H1 (cell line): ENCODE measurements at regions of chr9 and their contacts with region 1.

Region 1: DNA sequence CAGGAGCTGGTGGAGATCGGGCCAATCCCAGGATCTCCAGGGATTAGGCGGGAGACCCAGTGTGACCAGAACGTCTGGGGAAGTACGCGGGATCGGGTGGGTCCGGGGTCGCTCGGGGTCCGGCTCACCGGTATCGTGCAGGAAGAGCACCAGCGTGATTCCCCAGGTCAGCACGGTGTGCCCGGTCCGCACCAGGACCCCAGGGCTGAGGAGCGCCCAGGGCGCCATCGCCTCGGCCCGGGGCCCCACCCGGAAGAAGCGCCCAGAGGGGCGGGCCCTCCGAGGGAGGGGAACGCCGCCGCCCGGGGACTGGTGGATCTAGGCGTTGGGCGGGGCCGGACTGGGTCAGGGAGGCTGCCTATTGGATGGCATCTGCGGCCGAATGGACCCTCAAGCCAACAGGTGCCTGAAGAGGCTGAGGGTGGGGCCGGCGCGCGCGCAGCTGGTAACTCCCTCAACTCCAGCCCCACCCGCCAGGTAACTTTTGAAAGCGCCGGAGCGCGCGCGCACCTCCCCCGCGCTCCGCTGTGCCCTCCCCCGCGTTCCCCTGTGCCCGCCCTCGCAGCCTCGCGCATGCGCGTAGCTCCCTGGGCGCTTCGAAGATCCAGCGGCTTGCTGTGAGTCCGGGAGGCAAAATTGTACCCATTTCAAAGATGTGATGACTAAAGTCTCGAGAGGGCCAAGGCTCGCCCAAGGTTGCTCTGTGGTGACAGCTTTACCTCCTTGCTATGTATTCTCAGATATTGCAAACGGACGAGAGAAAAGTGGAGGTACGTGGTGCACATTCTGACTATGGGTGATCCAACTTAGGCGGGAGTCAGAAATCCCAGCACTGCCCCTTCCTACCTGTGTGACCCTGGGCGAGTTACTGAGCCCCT is at the start of gene ZDHHC12:
- DNase-seq: peak; percentile 98
- H3K4me3 ChIP-seq: peak within 1 kb of the TSS; percentile 73 to 92 (median 90)
- H3K27ac ChIP-seq: peak within 1 kb of the TSS; percentile 46
- H3K4me1 ChIP-seq: peaks cover 0 to 3% (median 0%) of the 10 kb centered on the region in 4 experiments; a peak in 3 of 7 replicates
- H3K27me3 ChIP-seq: no peaks in the 10 kb centered on the region
- CTCF ChIP-seq: no peak
- EP300 ChIP-seq: no peak
- POLR2A ChIP-seq: peak; percentile 62 to 94
- RAD21 ChIP-seq: no peak
- total RNA-seq, gene ZDHHC12: 32.8 and 35.0 TPM in 2 replicates

Region 2: GRCh38 chr9:128635283-128636023 is 88.7 kb before region 1 on chr9:
- CTCF ChIA-PET with region 1: interaction called, 9 read pairs
- POLR2A ChIA-PET with region 1: interaction called, 10 read pairs
- DNase-seq: peak; percentile 81 to 90
- H3K4me3 ChIP-seq: no peak overlapping the region
- H3K27ac ChIP-seq: peak overlapping the region; percentile 34; the same call in 1 of the 2 replicates
- H3K4me1 ChIP-seq: peaks cover 0 to 14% (median 11%) of the 10 kb centered on the region in 4 experiments; a peak in 5 of 7 replicates
- H3K27me3 ChIP-seq: no peaks in the 10 kb centered on the region
- CTCF ChIP-seq: peak in 2 of 3 experiments; percentile 59 to 68; a peak in 3 of 4 replicates
- EP300 ChIP-seq: no peak
- POLR2A ChIP-seq: no peak
- RAD21 ChIP-seq: peak; percentile 60 to 71

Region 3: DNA sequence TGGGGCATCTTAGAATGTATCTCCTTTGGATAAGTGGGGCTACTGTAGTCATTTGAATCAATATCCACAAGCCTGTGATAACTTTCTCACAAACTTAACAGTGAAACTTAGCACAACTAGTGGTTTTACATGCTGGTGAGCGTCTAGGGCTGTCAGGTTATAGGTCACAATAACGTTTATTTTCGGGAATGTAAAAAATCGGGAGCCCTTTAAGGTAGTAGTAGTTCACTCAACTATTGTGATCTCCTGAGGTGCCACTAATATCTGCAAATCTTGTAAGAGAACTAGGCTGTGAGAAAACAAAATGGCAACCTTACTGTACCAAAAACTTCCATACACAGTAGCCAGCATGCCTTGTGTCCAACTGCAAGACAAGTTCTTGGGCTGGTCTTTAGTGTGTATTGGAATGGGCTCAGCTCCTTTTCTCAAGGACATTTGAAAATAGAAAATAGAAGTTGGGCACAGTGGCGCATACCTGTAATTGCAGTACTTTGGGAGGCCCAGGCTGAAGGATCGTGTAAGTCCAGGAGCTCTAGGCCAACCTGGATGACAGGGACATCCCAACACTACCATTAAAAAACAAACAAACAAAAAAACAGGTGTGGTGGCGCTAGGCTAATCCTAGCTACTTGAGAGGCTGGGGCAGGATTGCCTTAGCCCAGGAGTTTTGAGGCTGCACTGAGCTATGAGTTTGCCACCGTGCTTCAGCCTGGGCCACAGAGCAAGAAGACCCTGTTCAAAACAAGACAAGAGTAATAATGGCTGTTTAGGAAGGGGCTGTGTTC is 27.0 kb before region 1 on chr9:
- CTCF ChIA-PET with region 1: interaction called, 3 read pairs
- POLR2A ChIA-PET with region 1: interaction called, 49 read pairs
- DNase-seq: no peak
- H3K4me3 ChIP-seq: no peak overlapping the region
- H3K27ac ChIP-seq: no peak overlapping the region
- H3K4me1 ChIP-seq: no peaks in the 10 kb centered on the region
- H3K27me3 ChIP-seq: peaks cover 0 to 1% (median 0%) of the 10 kb centered on the region in 4 experiments; a peak in 1 of 7 replicates
- CTCF ChIP-seq: no peak
- EP300 ChIP-seq: no peak
- POLR2A ChIP-seq: peak; percentile 54 to 68
- RAD21 ChIP-seq: no peak

Region 4: GRCh38 chr9:128702445-128702948 is 21.6 kb before region 1 on chr9 and contains the start of gene PKN3:
- CTCF ChIA-PET with region 1: interaction called, 3 read pairs
- POLR2A ChIA-PET with region 1: interaction called, 133 read pairs
- DNase-seq: peak; percentile 61 to 99
- H3K4me3 ChIP-seq: peak within 1 kb of the TSS; percentile 51 to 75 (median 65)
- H3K27ac ChIP-seq: no peak within 1 kb of the TSS; the same call in 1 of the 2 replicates
- H3K4me1 ChIP-seq: peaks cover 0 to 4% (median 2%) of the 10 kb centered on the region in 4 experiments; a peak in 3 of 7 replicates
- H3K27me3 ChIP-seq: no peaks in the 10 kb centered on the region
- CTCF ChIP-seq: peak; percentile 72 to 87 (median 86)
- EP300 ChIP-seq: 0 out of 3 replicates have a peak, but pooled peaks of 1 of the 2 experiments have one; percentile 20
- POLR2A ChIP-seq: no peak; a peak in 1 of 3 replicates
- RAD21 ChIP-seq: peak; percentile 34 to 46; a peak in 3 of 4 replicates
- total RNA-seq, gene PKN3: 15.2 and 16.3 TPM in 2 replicates